A673 (cell line): ENCODE measurements at regions of chr1 and their contacts with region 1.

Region 1: DNA sequence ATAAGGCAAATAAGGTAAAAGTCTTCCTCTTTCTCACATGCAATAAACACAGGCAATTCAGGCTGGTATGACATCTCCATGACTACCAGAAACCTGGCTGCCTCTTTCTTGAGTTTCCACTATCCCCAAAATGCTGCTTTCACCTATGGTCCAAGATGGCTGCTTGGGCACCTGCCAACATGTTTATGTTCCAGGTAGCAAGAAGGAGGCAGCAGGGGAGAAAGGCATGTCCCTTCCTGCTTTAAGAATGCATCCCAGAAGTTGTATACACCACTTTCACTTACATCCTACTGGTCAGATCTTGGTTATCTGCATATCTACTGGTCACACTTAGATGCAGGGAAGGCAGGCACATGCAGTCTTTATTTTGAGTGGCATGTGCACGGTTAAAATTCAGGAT is 19.4 kb upstream of the ACOT11 start:
- DNase-seq: no peak
- H3K4me3 ChIP-seq: no peak overlapping the region
- H3K27ac ChIP-seq: no peak overlapping the region
- H3K4me1 ChIP-seq: no peaks in the 10 kb centered on the region
- H3K27me3 ChIP-seq: no peaks in the 10 kb centered on the region
- CTCF ChIP-seq: no peak

Region 2: GRCh38 chr1:54442185-54442584 is 86.4 kb before region 1 on chr1:
- CTCF ChIA-PET with region 1: no interaction called
- POLR2A ChIA-PET with region 1: no interaction called
- intact Hi-C with region 1: no loop called
- DNase-seq: no peak
- H3K4me3 ChIP-seq: no peak overlapping the region
- H3K27ac ChIP-seq: no peak overlapping the region
- H3K4me1 ChIP-seq: no peaks in the 10 kb centered on the region
- H3K27me3 ChIP-seq: no peaks in the 10 kb centered on the region
- CTCF ChIP-seq: no peak

Region 3: DNA sequence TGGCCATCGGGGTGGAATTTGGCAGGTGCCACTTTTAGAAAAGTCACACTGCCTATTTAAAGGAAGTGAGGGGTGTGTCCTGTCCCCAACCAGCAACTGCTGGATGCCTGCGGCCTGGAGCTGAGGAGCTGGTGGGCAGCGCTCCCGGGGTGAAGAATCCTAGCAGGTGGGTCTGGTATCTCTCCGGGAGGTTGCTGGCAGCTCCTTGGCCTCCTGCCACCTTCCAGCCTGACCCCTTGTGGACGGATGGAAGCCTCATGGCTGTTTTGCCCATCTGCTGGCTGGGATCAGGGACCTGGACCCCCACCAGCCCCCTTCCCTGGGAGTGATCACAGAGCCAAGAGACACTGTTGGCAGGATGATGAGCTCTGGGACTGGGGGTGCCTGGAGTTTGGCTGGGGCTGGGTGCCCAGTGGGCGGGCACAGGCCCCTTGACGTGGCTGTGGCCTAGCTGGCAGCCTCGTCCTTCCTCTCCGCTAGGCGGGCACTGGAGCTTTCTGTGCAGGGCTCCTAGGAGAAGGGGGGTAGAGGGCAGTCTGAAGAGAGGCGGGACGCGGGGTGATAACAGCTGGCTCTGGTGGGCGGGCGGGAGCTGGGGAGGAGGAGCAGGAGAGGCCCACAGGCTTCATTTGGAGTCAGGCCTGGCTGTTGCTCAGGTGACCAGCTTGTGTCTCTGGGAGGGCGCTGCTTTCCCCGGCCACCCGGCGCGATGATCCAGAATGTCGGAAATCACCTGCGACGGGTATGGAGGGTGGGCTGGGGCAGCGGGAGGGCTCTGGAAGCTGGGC is 19.2 kb after region 1 on chr1 and contains the start of gene ACOT11:
- CTCF ChIA-PET with region 1: no interaction called
- POLR2A ChIA-PET with region 1: interaction called, 20 read pairs
- intact Hi-C with region 1: no loop called
- DNase-seq: peak; percentile 67
- H3K4me3 ChIP-seq: no peak within 1 kb of the TSS
- H3K27ac ChIP-seq: peak within 1 kb of the TSS; percentile 43
- H3K4me1 ChIP-seq: peaks cover 18% of the 10 kb centered on the region
- H3K27me3 ChIP-seq: no peaks in the 10 kb centered on the region
- CTCF ChIP-seq: peak; percentile 33; the same call in 1 of the 2 replicates
- total RNA-seq, gene ACOT11: 5.5 and 5.6 TPM in 2 replicates